ENCODE measurements at regions of chr2 and their contacts with region 1.

Region 1: DNA sequence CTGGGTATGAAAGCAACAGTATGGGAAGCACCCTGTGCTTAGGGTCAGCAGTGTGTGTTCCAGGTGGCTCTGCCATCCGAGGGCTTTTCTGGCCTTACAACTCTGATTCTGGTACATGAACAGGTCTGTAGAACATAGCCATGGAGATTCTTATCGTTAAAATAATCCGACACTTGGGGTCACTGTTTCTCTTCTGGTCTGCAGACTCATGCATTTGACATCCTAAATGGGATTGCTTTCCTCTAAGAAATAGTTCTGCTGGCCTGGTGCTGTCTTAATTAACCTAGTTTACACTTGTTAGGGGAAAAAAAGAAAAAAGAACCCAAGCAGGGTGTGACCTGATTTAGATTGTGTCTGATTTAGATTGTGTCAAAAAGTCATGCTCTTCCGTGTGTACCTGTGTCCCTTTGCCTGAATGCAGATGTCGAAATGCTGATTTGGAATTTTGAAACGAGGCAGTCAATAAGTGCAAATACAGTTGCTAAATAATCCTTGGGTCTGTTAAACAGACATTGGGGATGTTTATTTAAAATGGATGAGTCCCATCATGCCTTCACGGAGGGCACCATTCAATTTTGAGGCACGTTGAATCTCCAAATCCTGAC is 59.6 kb downstream of the TRPM8 start:
- DNase-seq: peak; percentile 56 to 94
- H3K4me3 ChIP-seq: no peak overlapping the region
- H3K27ac ChIP-seq: peak overlapping the region; percentile 55
- H3K4me1 ChIP-seq: peaks cover 69% of the 10 kb centered on the region
- H3K27me3 ChIP-seq: no peaks in the 10 kb centered on the region
- CTCF ChIP-seq: peak; percentile 88

Region 2: DNA sequence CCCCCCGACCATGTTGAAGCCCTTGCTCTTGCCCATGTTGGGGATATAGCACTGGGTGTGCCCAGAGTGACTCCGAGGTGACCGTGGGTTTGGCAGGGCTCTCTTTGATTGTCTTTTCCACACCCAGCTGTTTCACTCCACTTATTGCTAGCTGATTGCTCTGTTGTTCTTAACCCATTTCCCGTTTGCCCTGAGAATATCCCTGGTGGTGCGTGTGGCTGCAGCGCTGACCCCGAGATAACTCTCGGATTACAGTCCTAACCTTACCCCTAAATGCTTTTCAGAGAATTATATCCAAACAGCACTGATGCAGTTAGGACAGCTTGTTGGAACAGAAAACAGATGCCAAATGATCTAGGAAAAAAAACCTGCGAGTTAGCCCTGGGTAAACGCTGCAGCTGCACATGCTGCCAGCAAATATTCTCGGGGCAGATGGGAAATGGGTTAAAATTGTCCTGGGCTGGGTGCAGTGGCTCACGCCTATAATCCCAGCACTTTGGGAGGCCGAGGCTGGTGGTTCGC is 1141.0 kb before region 1 on chr2:
- CTCF ChIA-PET with region 1: no interaction called
- POLR2A ChIA-PET with region 1: no interaction called
- intact Hi-C with region 1: no loop called
- DNase-seq: no peak
- H3K4me3 ChIP-seq: no peak overlapping the region
- H3K27ac ChIP-seq: no peak overlapping the region
- H3K4me1 ChIP-seq: peaks cover 24% of the 10 kb centered on the region
- H3K27me3 ChIP-seq: no peaks in the 10 kb centered on the region
- CTCF ChIP-seq: no peak

Region 3: GRCh38 chr2:233846387-233847247 is 130.2 kb before region 1 on chr2:
- CTCF ChIA-PET with region 1: no interaction called
- POLR2A ChIA-PET with region 1: interaction called, 19 read pairs
- intact Hi-C with region 1: no loop called
- DNase-seq: no peak
- H3K4me3 ChIP-seq: no peak overlapping the region
- H3K27ac ChIP-seq: no peak overlapping the region
- H3K4me1 ChIP-seq: peaks cover 5% of the 10 kb centered on the region; the same call in 1 of the 2 replicates
- H3K27me3 ChIP-seq: no peaks in the 10 kb centered on the region
- CTCF ChIP-seq: no peak

Region 4: GRCh38 chr2:234102112-234102511 is 125.3 kb after region 1 on chr2:
- CTCF ChIA-PET with region 1: no interaction called
- POLR2A ChIA-PET with region 1: no interaction called
- intact Hi-C with region 1: loop called (anchors 1 kb)
- DNase-seq: peak; percentile 38 to 67
- H3K4me3 ChIP-seq: no peak overlapping the region
- H3K27ac ChIP-seq: no peak overlapping the region
- H3K4me1 ChIP-seq: peaks cover 10% of the 10 kb centered on the region
- H3K27me3 ChIP-seq: no peaks in the 10 kb centered on the region
- CTCF ChIP-seq: peak; percentile 31; the same call in 1 of the 2 replicates

Region 5: DNA sequence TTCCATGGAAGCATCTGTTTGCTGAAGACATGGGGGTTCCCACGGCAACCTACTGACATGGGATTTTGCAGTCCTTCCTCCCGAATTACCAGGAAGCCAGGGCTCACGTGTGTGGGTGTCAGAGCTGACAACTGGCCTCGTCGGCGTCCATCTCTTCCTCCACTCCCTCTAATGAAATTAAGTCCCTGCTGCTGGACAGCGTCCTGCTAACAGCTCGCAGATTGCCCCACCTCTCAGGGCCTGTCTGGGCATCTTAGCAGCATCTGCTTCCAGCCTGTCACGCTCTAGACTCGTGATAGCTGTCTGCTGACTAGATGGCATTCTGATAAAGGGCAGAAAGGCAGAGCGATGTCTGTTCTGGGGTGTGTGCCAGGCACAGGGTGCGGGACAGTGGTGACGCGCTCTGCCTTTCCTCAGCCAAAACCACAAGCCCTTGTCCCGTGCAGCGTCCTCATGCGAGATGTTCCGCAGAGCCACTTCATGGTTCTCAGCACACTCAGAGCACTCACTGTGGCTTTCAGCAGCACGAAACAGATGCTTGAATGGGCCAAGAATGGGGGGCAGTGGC is 359.0 kb after region 1 on chr2:
- CTCF ChIA-PET with region 1: no interaction called
- POLR2A ChIA-PET with region 1: interaction called, 14 read pairs
- intact Hi-C with region 1: no loop called
- DNase-seq: peak in 1 of 2 experiments; percentile 39
- H3K4me3 ChIP-seq: no peak overlapping the region
- H3K27ac ChIP-seq: no peak overlapping the region
- H3K4me1 ChIP-seq: peaks cover 16% of the 10 kb centered on the region
- H3K27me3 ChIP-seq: no peaks in the 10 kb centered on the region
- CTCF ChIP-seq: no peak

Region 6: DNA sequence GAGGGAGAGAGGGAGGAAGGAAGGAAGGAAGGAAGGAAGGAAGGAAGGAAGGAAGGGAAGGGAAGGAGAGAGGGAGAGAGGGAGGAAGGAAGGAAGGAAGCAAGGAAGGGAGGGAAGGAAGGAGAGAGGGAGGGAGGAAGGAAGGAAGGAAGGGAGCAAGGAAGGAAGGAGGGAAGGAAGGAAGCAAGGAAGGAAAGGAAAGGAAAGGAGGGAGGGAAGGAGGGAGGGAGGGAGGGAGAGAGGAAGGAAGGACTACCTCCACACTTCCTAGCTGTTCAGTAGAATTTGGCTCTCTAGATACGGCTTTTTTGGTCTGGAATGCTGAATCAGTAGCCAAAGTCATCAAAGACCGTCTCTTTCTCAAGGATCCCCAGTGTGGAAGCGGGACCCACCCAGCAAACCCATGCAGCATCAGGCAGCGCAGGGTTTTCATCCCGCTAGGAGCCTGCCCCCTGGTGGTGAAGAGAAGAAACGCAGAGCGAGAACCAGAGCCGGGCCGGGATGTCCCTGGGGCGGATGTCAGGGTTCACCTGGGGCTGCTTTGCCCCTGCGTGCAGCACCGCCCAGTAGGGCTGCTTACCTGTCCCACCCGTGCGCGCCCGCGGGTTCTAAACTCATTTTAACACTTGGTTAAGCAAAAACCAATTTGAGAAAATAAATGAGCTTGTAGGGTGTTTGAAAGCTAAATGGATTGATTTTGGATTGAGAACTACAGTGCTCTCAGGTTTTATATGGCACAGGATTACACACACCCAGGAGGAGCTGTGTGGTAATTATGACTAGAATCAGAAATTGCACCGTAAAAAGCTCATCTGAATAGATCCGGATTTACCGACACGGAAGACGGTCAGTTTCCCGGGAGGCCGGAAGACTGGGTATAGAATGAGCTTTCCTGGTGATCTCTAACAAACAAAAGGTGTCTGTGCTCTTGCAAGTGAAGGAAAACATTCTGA is 568.1 kb after region 1 on chr2:
- CTCF ChIA-PET with region 1: interaction called, 3 read pairs
- POLR2A ChIA-PET with region 1: interaction called, 4 read pairs
- intact Hi-C with region 1: loop called (anchors 1 kb)
- DNase-seq: peak; percentile 66 to 83
- H3K4me3 ChIP-seq: no peak overlapping the region
- H3K27ac ChIP-seq: no peak overlapping the region
- H3K4me1 ChIP-seq: peaks cover 4% of the 10 kb centered on the region; the same call in 1 of the 2 replicates
- H3K27me3 ChIP-seq: no peaks in the 10 kb centered on the region
- CTCF ChIP-seq: peak; percentile 98

Region 7: GRCh38 chr2:235050992-235051351 is 1074.2 kb after region 1 on chr2:
- CTCF ChIA-PET with region 1: no interaction called
- POLR2A ChIA-PET with region 1: no interaction called
- intact Hi-C with region 1: loop called (anchors 10 kb)
- DNase-seq: peak; percentile 89 to 97
- H3K4me3 ChIP-seq: no peak overlapping the region
- H3K27ac ChIP-seq: peak overlapping the region; percentile 74
- H3K4me1 ChIP-seq: peaks cover 57% of the 10 kb centered on the region
- H3K27me3 ChIP-seq: no peaks in the 10 kb centered on the region
- CTCF ChIP-seq: no peak; the same call in 1 of the 2 replicates

Measured in PC-9 (cell line).